GM18951 (cell line): ENCODE measurements at regions of chr5 and their contacts with region 1.

Region 1: GRCh38 chr5:99032234-99033013 is 103.6 kb upstream of the CHD1 start:
- POLR2A ChIP-seq: no peak

Region 2: DNA sequence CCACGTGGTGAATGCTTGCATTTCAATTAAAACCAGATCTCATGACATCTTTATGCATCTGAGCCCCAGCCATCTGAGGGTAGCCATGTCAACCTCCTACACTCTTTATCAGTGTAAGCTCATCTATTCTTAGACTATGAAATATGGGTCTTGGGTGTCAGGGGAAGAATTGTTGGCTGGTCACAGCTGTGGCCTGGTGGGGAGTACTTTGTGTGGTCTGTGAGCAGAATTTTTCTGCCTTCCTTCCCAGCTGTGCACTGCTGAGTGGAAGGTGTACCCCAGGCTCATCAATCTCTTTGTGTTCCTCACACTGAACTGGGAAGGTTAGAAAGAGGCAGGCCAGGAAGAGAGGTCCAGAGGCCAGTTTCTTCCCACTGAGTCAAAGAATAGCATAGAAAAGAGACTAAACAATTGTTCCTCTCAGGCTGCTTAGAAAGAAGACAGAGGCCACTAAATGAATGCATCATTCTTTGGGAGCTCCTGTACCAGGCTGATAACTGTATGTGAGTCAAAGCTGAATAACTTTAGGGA is 461.7 kb before region 1 on chr5:
- in situ Hi-C with region 1: no loop called
- POLR2A ChIP-seq: no peak

Region 3: DNA sequence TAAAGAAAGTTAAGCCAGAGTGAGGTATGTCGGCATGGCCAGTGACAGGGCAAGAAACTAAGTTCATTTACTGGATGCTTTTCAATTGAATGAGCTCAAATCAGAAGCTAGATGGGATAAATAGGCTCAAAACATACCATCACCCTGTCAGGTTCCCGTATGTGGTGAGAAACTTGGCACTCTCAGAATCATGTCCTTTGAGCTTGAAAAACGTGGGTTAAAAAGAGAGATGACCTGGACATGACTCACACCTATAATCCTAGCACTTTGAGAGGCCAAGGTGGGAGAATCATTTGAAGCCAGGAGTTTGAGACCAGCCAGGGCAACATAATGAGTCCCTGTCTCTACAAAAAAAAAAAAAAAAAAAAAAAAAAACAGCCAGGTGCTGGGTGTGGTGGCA is 380.7 kb before region 1 on chr5:
- in situ Hi-C with region 1: no loop called
- POLR2A ChIP-seq: no peak

Region 4: DNA sequence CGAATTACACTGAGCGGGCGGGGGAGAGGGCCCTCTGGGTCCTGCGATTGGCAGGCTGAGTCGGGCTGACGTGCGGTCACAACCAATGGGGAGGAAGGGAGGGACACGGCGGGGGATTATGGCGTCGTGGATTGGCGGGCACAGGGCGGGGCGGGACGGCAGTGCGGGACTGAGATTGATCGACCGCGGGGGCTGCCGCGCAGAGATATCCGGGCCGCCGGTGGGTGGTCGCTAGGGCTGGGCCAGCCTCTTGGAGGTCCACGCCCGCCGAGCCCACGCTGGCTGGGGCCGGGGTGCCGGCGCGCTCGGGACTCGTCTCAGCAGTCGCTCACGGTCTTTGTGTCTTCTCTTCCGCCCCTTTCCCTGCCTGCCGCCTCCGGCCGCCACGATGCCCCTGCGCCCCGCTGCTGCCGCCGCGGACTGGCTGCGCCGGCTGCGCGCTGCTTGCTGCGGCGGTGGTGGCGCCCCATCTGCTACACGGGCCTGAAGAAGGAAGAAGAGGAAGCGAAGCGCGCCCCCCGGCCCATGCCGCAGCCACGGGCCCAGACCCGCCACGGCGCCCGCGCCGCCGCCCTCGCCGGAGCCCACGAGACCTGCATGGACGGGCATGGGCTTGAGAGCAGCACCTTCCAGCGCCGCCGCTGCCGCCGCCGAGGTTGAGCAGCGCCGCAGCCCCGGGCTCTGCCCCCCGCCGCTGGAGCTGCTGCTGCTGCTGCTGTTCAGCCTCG is 258.8 kb before region 1 on chr5 and contains the start of gene RGMB:
- in situ Hi-C with region 1: loop called (anchors 10 kb)
- POLR2A ChIP-seq: peak; percentile 67

Region 5: DNA sequence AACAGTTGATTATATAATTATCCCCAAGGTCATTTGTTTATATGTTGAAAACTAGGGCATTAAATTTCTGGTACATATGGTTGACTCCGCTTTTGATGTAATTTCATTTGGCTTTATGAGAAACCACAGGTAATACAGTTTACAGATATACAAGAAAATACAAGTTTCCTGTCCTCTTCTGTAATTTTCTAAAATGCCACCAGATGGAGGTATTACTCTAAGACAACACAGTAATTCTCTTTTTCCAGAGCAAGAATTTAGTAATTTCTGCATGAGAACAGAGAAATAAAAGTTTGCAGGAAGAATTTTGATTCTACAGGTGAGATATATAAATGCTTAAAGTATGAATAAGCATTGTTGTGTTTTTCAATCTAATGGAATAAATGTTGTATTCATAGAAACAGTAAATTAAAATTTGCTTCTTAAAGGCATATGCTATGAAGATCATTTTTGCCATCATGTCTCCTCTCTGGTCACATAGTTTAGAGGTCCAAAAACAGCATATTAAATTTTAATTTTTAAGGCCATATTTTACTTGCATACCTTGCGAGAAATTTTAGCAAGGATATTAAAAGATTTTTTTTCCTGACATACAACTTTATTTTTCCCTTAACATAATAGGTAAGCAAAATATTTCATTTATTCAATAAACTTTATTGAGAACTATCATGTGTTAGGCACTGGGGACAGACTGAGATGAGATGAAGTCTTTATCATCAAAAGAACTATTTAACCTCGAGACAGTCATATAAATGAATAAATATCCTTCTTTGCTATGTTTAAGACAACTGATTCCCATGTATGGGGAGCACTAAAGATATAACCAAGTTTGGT is 126.3 kb before region 1 on chr5:
- in situ Hi-C with region 1: loop called (anchors 5 kb)
- POLR2A ChIP-seq: no peak

Region 6: GRCh38 chr5:99104538-99105132 is 72.2 kb after region 1 on chr5:
- in situ Hi-C with region 1: no loop called
- POLR2A ChIP-seq: no peak